ENCODE measurements at regions of chr11 and their contacts with region 1.

Region 1: GRCh38 chr11:85595285-85595884 is 31.8 kb downstream of the DLG2 start:
- DNase-seq: peak; percentile 72
- H3K4me3 ChIP-seq: no peak overlapping the region
- H3K27ac ChIP-seq: no peak overlapping the region
- H3K4me1 ChIP-seq: no peaks in the 10 kb centered on the region
- H3K27me3 ChIP-seq: no peaks in the 10 kb centered on the region
- CTCF ChIP-seq: peak; percentile 71

Region 2: DNA sequence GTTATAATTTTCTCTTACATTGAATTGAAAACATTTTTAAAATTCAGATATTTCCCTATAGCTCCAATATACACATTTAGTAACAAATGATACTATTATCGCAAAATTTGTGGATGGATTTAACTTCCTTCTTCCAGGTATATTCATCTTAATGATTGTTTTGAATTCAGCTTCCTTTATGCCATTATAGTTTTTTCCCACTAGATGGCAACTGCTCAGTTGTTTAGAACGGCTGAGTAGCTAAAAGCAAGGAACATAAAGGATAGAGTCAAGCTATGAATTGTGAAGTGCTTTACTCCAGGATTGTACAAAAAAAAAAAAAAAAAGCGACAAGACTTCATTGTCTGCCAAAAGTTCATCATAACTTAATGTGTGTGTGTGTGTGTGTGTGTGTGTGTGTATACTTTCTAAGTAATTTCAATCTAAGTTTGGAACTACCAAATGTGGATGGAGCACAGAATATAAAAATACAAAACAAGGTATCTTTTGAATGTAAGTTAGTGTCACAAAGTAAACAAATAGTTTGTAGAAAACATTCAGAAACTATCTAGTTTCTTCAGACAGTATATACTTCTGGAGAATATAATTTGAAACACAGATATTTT is 814.6 kb before region 1 on chr11:
- CTCF ChIA-PET with region 1: interaction called, 7 read pairs
- POLR2A ChIA-PET with region 1: no interaction called
- intact Hi-C with region 1: loop called (anchors 5 kb)
- DNase-seq: peak; percentile 34
- H3K4me3 ChIP-seq: no peak overlapping the region
- H3K27ac ChIP-seq: no peak overlapping the region
- H3K4me1 ChIP-seq: no peaks in the 10 kb centered on the region
- H3K27me3 ChIP-seq: no peaks in the 10 kb centered on the region
- CTCF ChIP-seq: peak; percentile 64

Region 3: GRCh38 chr11:85464283-85464682 is 131.1 kb before region 1 on chr11:
- CTCF ChIA-PET with region 1: interaction called, 4 read pairs
- POLR2A ChIA-PET with region 1: no interaction called
- intact Hi-C with region 1: loop called (anchors 2 kb)
- DNase-seq: peak; percentile 11
- H3K4me3 ChIP-seq: no peak overlapping the region
- H3K27ac ChIP-seq: no peak overlapping the region
- H3K4me1 ChIP-seq: no peaks in the 10 kb centered on the region
- H3K27me3 ChIP-seq: peaks cover 11% of the 10 kb centered on the region
- CTCF ChIP-seq: peak; percentile 45; the same call in 1 of the 2 replicates

Region 4: DNA sequence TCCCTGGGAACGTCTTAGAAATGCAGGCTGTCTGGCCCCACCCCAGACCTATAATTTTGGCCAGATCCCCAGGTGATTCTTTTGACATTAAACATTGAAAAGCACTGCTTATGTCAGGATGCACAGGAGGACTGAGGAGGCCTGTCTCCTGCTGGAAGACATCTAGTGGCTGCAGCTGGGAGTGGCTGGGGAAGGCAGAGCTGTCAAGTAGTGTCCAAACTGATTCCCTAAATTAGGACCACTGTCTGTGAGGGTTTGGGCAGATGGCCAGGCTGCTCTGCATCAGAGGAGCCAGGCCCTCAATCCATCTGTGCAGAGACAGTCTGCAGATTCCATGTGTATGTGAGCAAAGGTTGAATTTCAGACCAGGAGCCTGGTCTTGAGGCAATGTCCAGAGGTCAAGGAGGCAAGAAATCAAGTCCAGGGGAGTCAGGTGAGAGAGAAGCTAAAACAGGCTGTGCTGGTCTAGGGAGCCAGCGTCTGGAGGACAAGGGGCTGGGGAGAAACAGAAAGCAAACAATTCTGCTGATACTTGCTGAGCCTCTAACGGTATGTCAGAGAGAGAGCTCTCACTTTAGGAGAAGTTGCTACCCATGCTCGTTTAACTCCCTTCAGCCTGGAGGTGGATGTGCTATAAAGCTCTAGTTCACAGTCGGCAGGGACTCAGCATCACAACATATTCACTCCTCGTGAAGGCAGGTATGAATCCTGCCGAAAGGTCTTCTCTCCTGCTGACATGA is 230.9 kb after region 1 on chr11:
- CTCF ChIA-PET with region 1: no interaction called
- POLR2A ChIA-PET with region 1: no interaction called
- intact Hi-C with region 1: loop called (anchors 10 kb)
- DNase-seq: peak; percentile 24
- H3K4me3 ChIP-seq: no peak overlapping the region
- H3K27ac ChIP-seq: no peak overlapping the region
- H3K4me1 ChIP-seq: no peaks in the 10 kb centered on the region
- H3K27me3 ChIP-seq: no peaks in the 10 kb centered on the region
- CTCF ChIP-seq: peak; percentile 45

Region 5: GRCh38 chr11:86291466-86292262 is 696.3 kb after region 1 on chr11:
- CTCF ChIA-PET with region 1: no interaction called
- POLR2A ChIA-PET with region 1: no interaction called
- intact Hi-C with region 1: loop called (anchors 5 kb)
- DNase-seq: peak; percentile 80
- H3K4me3 ChIP-seq: no peak overlapping the region
- H3K27ac ChIP-seq: no peak overlapping the region
- H3K4me1 ChIP-seq: no peaks in the 10 kb centered on the region
- H3K27me3 ChIP-seq: no peaks in the 10 kb centered on the region
- CTCF ChIP-seq: peak; percentile 86